Common myeloid progenitor, CD34-positive (primary cell): ENCODE measurements at regions of chr1 and their contacts with region 1.

Region 1: GRCh38 chr1:224458996-224459395 is 24.4 kb upstream of the WDR26 start:
- DNase-seq: peak; percentile 45 to 91 (median 86)
- H3K4me3 ChIP-seq: no peak overlapping the region
- H3K27ac ChIP-seq: no peak overlapping the region
- H3K4me1 ChIP-seq: peaks cover 3 to 34% (median 18%) of the 10 kb centered on the region in 4 experiments
- H3K27me3 ChIP-seq: no peaks in the 10 kb centered on the region

Region 2: DNA sequence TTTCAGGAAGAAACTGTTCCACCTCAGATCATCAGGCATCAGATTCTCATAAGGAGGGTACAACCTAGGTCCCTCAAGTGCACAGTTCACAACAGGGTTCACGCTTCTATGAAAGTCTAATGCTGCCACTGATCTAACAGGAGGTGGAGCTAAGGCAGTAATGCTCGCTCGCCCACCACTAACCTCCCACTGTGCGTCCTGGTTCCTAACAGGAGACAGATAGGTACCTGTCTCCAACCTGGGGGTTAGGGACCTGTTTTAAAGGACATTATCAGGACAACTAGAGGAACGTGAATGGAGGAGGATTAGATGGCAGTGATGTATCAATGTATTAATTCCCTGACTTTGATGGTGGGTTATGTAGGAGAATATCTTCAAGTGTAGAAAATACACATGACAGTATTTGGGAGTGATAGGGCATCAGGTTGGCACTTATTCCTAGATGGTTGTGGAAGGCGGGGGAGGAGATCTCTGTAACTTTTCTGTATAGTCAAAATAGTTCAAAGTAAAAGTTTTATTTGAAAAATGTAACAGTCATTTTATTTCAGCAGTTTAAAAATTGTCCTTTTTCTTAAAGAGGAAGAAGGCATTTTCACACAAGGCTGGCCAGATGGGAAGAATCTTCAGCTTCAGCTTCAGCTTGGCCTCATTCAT is 232.0 kb before region 1 on chr1:
- CTCF ChIA-PET with region 1: no interaction called
- POLR2A ChIA-PET with region 1: no interaction called
- DNase-seq: no peak
- H3K4me3 ChIP-seq: no peak overlapping the region
- H3K27ac ChIP-seq: no peak overlapping the region
- H3K4me1 ChIP-seq: no peaks in the 10 kb centered on the region
- H3K27me3 ChIP-seq: no peaks in the 10 kb centered on the region

Region 3: GRCh38 chr1:224411766-224412165 is 47.2 kb before region 1 on chr1:
- CTCF ChIA-PET with region 1: interaction called, 12 read pairs
- POLR2A ChIA-PET with region 1: no interaction called
- DNase-seq: peak in 1 of 3 donors; percentile 4
- H3K4me3 ChIP-seq: no peak overlapping the region
- H3K27ac ChIP-seq: no peak overlapping the region
- H3K4me1 ChIP-seq: no peaks in the 10 kb centered on the region
- H3K27me3 ChIP-seq: no peaks in the 10 kb centered on the region

Region 4: GRCh38 chr1:224427346-224427745 is 31.6 kb before region 1 on chr1:
- CTCF ChIA-PET with region 1: interaction called, 57 read pairs
- POLR2A ChIA-PET with region 1: interaction called, 3 read pairs
- DNase-seq: no peak
- H3K4me3 ChIP-seq: no peak overlapping the region
- H3K27ac ChIP-seq: no peak overlapping the region
- H3K4me1 ChIP-seq: peaks cover 20 to 27% (median 24%) of the 10 kb centered on the region in 4 experiments
- H3K27me3 ChIP-seq: no peaks in the 10 kb centered on the region

Region 5: GRCh38 chr1:224434691-224435317 is 24.2 kb before region 1 on chr1 and contains the start of gene WDR26:
- CTCF ChIA-PET with region 1: interaction called, 57 read pairs
- POLR2A ChIA-PET with region 1: interaction called, 3 read pairs
- DNase-seq: peak; percentile 76 to 89 (median 81)
- H3K4me3 ChIP-seq: peak within 1 kb of the TSS; percentile 73 to 96 (median 79)
- H3K27ac ChIP-seq: peak within 1 kb of the TSS; percentile 61 to 89
- H3K4me1 ChIP-seq: peaks cover 38 to 51% (median 41%) of the 10 kb centered on the region in 4 experiments
- H3K27me3 ChIP-seq: no peaks in the 10 kb centered on the region

Region 6: GRCh38 chr1:224447251-224447650 is 11.7 kb before region 1 on chr1:
- CTCF ChIA-PET with region 1: interaction called, 19 read pairs
- POLR2A ChIA-PET with region 1: no interaction called
- DNase-seq: no peak
- H3K4me3 ChIP-seq: no peak overlapping the region
- H3K27ac ChIP-seq: no peak overlapping the region
- H3K4me1 ChIP-seq: no peaks in the 10 kb centered on the region
- H3K27me3 ChIP-seq: no peaks in the 10 kb centered on the region

Region 7: GRCh38 chr1:224488806-224489499 is 30.0 kb after region 1 on chr1:
- CTCF ChIA-PET with region 1: no interaction called
- POLR2A ChIA-PET with region 1: no interaction called
- DNase-seq: no peak
- H3K4me3 ChIP-seq: no peak overlapping the region
- H3K27ac ChIP-seq: no peak overlapping the region
- H3K4me1 ChIP-seq: peaks cover 0 to 10% (median 0%) of the 10 kb centered on the region in 4 experiments
- H3K27me3 ChIP-seq: no peaks in the 10 kb centered on the region